Posterior vena cava (tissue), 2 donors: ENCODE measurements at regions of chr3 and their contacts with region 1.

Region 1: DNA sequence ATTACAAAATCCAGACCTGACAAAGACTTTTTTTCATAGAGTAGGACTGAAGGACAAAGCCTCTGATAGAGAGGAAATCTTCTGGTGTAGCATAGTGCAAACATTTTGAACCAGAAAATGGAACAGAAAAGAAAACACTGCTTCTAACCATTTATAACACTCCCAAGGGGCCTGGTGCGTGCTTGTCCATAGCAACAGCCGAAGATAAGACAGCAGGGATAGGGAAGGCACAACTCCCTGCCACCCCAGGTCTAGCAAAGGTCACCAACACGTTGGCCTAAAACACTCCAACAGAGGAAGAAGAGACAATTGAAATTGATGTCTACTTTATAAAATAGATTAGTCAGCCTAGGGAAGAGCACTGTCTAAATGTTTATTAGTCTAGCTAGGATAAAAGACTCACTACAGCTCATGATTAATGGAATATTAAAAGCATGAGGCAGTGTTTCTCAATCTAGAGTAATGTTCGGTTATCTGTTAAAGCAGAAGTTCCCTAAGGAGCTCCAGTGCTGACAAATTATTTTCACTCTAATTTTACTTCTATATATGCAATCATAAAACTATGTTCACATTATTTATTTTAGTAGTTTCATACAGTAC is 145.2 kb downstream of the P3H2 start:
- DNase-seq: no peak

Region 2: GRCh38 chr3:189995129-189995528 is 19.6 kb after region 1 on chr3:
- intact Hi-C with region 1: loop called in 1 of 2 experiments (anchors 2 kb)
- DNase-seq: no peak

Region 3: GRCh38 chr3:190120269-190121060 is 145.0 kb after region 1 on chr3 and contains the start of gene P3H2:
- intact Hi-C with region 1: loop called in 1 of 2 experiments (anchors 10 kb)
- DNase-seq: peak; percentile 90
- total RNA-seq, gene P3H2: 9.7 to 20.5 TPM

Region 4: GRCh38 chr3:190192739-190193138 is 217.2 kb after region 1 on chr3:
- intact Hi-C with region 1: loop called in 1 of 2 experiments (anchors 5 kb)
- DNase-seq: no peak